Activated CD8-positive, alpha-beta memory T cell treated with anti-CD3 and anti-CD28 coated beads, Interleukin-2, amount 10 ng/mL, durations not matched to agents 7 days and 5 days (primary cell): ENCODE measurements at regions of chr11 and their contacts with region 1.

Region 1: GRCh38 chr11:64341851-64342791 is 2.1 kb downstream of the CCDC88B start:
- DNase-seq: peak; percentile 95
- ATAC-seq: peak; percentile 78
- H3K4me3 Mint-ChIP-seq: peak overlapping the region; percentile 30
- H3K27ac Mint-ChIP-seq: no peak overlapping the region
- H3K4me1 Mint-ChIP-seq: peaks cover 50% of the 10 kb centered on the region
- H3K27me3 Mint-ChIP-seq: no peaks in the 10 kb centered on the region

Region 2: DNA sequence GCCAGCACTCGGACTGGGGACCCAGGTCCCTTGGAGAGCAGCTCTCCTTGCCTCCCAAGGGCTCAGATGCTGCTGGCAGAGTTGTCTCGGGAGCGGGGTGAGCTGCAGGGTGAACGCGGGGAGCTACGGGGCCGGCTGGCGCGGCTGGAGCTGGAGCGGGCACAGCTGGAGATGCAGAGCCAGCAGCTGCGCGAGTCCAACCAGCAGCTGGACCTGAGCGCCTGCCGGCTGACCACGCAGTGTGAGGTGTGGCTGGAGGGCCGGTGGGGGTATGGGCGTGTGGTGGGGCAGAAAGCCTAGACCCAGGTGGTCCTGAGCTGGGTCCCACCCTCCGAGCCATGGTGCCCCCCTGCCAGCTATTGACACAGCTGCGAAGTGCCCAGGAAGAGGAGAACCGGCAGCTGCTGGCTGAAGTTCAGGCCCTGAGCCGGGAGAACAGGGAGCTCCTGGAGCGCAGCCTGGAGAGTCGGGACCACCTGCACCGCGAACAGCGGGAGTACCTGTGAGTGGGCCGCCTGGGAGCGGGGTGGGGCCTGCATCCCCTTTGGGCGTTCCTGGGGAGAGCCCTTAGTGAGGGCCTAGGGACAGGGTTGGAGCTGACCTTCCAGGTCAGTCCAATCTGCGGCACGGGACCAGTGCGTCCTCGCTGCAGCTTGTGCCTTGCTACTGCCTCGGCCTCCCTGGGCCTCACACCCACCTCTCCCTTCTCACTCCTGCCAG is 11.0 kb after region 1 on chr11:
- CTCF ChIA-PET with region 1: interaction called, 14 read pairs
- DNase-seq: no peak
- ATAC-seq: no peak
- H3K4me3 Mint-ChIP-seq: no peak overlapping the region
- H3K27ac Mint-ChIP-seq: no peak overlapping the region
- H3K4me1 Mint-ChIP-seq: peaks cover 13% of the 10 kb centered on the region
- H3K27me3 Mint-ChIP-seq: no peaks in the 10 kb centered on the region